Endothelial cell of umbilical vein (primary cell): ENCODE measurements at regions of chr4 and their contacts with region 1.

Region 1: GRCh38 chr4:25367004-25367621 is 9.9 kb upstream of the ANAPC4 start:
- DNase-seq: peak; percentile 63
- H3K4me3 ChIP-seq: no peak overlapping the region
- H3K27ac ChIP-seq: no peak overlapping the region
- H3K4me1 ChIP-seq: no peaks in the 10 kb centered on the region
- H3K27me3 ChIP-seq: no peaks in the 10 kb centered on the region
- CTCF ChIP-seq: peak; percentile 24 to 34
- POLR2A ChIP-seq: no peak

Region 2: GRCh38 chr4:25144870-25145481 is 222.1 kb before region 1 on chr4:
- CTCF ChIA-PET with region 1: interaction called, 12 read pairs
- POLR2A ChIA-PET with region 1: no interaction called
- dilution Hi-C with region 1: no loop called
- intact Hi-C with region 1: no loop called
- DNase-seq: peak; percentile 61
- H3K4me3 ChIP-seq: no peak overlapping the region
- H3K27ac ChIP-seq: no peak overlapping the region
- H3K4me1 ChIP-seq: no peaks in the 10 kb centered on the region
- H3K27me3 ChIP-seq: no peaks in the 10 kb centered on the region
- CTCF ChIP-seq: peak; percentile 37 to 49
- POLR2A ChIP-seq: no peak

Region 3: GRCh38 chr4:25172961-25173915 is 193.9 kb before region 1 on chr4:
- CTCF ChIA-PET with region 1: interaction called, 52 read pairs
- POLR2A ChIA-PET with region 1: no interaction called
- dilution Hi-C with region 1: no loop called
- intact Hi-C with region 1: no loop called
- DNase-seq: peak; percentile 91
- H3K4me3 ChIP-seq: no peak overlapping the region
- H3K27ac ChIP-seq: peak overlapping the region; percentile 41
- H3K4me1 ChIP-seq: peaks cover 16% of the 10 kb centered on the region
- H3K27me3 ChIP-seq: no peaks in the 10 kb centered on the region
- CTCF ChIP-seq: no peak
- POLR2A ChIP-seq: no peak

Region 4: DNA sequence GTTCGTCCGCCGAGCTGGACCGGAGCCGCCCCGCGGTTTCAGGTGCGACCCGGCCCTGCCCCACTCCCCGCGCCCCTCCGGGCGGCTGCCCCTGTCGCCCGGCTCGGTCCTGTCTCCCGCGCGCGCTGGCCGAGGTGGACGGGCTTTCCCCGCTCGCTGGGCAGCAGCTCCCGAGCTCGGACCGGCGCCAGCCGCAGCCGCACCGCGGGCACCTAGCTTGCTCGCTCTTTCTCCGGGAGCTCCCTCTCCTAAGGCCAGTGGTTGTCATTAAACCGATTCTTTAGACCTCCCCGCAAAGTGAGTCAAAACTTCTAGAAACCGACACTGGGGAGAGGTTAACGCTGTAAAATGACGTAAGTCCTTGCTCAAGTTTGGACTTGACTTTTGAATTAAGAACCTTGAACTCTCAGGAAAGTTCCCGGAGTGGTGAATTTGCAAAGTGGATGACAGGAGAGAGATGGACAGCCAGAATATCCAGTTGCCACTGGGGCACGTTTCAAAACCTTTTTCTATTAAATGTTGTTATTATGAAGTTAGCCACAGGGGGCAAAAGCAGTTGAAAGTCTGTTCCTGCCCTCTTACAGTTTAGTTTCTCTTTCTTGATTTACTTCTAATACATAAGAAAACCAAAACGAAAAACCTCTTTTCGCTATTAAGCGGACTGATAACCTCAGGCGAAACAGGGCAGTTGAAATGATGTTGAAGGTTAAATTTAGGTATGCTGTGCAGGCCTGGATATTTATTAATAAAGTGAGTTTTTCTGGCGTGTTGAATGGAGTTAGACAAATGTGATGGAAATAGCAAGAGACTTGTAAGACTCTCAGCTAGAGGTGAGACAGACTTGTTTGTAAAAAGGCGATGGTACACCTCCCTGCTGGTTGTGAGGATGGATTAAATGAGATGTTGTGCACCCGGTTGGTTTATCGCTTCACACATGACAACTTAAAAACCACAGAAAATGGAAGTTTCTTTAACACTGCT is 132.4 kb before region 1 on chr4:
- CTCF ChIA-PET with region 1: interaction called, 32 read pairs
- POLR2A ChIA-PET with region 1: no interaction called
- dilution Hi-C with region 1: no loop called
- intact Hi-C with region 1: loop called (anchors 5 kb)
- DNase-seq: peak; percentile 92
- H3K4me3 ChIP-seq: peak overlapping the region; percentile 49 to 77 (median 57)
- H3K27ac ChIP-seq: peak overlapping the region; percentile 62
- H3K4me1 ChIP-seq: peaks cover 8% of the 10 kb centered on the region
- H3K27me3 ChIP-seq: no peaks in the 10 kb centered on the region
- CTCF ChIP-seq: peak; percentile 20 to 37
- POLR2A ChIP-seq: no peak